ENCODE measurements at regions of chr2 and their contacts with region 1.

Region 1: GRCh38 chr2:147490401-147491261 is 354.2 kb upstream of the ACVR2A start:
- DNase-seq: no peak
- ATAC-seq: no peak
- H3K4me3 ChIP-seq: no peak overlapping the region
- H3K27ac ChIP-seq: no peak overlapping the region
- H3K4me1 ChIP-seq: no peaks in the 10 kb centered on the region
- H3K27me3 ChIP-seq: no peaks in the 10 kb centered on the region
- CTCF ChIP-seq: no peak

Region 2: DNA sequence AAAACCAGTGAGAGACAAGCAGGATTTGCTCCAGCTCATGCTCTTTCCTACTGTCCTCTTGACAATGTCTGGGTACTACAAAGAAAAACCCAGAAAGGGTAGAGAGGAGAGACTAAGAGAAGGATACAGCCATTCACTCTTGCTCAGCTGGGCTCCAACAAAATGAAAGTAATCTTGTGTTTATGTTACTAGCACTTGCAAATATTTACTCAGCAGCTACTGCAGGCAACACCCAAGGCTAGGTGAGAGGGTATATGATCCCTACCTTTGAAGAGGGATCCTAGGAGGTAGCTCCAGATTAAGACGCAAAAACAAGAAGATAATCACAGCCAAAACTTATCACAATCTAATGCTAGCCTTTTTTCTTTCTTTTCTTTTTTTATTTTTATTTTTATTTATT is 24.6 kb after region 1 on chr2:
- intact Hi-C with region 1: loop called in 1 of 10 experiments (anchors 1 kb)
- DNase-seq: no peak
- ATAC-seq: no peak
- H3K4me3 ChIP-seq: no peak overlapping the region
- H3K27ac ChIP-seq: no peak overlapping the region
- H3K4me1 ChIP-seq: peaks cover 0 to 13% (median 4%) of the 10 kb centered on the region in 9 donors
- H3K27me3 ChIP-seq: no peaks in the 10 kb centered on the region
- CTCF ChIP-seq: no peak

Measured in heart right ventricle (tissue), 16 donors.